ENCODE measurements at regions of chrX and their contacts with region 1.

Region 1: DNA sequence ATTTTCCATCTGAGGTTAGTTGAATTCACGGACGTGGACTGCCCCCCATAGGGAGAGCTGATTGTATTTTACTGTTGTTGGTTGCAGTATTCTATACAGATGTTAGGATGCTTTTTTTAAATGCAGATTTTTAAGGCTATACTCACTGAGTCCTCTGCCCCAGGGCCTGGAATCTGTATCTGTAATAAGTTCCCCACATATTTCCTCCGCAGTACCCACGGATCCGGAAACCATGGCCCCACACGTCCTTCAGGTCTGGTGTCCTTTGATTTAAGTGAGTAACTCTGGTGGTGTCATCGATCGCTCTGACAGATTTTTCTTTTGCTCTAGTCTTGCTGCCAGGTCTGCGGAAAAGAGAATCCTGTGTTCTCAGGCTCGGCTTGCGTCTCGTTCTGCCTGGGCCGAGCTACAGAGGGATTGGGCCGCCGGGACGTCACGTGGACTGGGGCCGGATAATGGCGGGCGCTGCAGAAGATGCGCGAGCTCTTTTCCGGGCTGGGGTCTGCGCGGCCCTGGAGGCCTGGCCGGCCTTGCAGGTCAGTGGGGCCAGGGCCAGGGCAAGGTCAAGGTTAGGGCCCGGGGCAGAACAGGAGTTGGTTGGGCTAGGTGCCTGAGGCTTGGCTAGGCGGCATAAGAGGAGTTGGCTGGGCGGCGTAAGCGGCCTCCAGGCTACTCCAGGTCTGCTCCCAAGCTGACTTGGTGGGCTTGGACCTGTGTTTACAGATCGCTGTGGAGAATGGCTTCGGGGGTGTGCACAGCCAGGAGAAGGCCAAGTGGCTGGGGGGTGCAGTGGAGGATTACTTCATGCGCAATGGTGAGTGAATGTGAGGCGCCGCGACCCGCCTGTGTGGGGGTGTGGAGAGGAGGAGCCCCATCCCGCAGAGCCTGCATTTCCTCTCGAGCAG is at the start of gene TSR2:
- DNase-seq: peak; percentile 86
- H3K4me3 Mint-ChIP-seq: peak within 1 kb of the TSS; percentile 89
- H3K27ac Mint-ChIP-seq: peak within 1 kb of the TSS; percentile 69
- H3K4me1 Mint-ChIP-seq: peaks cover 24% of the 10 kb centered on the region
- H3K27me3 Mint-ChIP-seq: no peaks in the 10 kb centered on the region
- total RNA-seq, gene TSR2: 24.4 to 26.1 TPM

Region 2: GRCh38 chrX:54182864-54183608 is 257.2 kb before region 1 on chrX and contains the start of gene FAM120C:
- CTCF ChIA-PET with region 1: no interaction called
- intact Hi-C with region 1: loop called (anchors 1 kb)
- DNase-seq: peak; percentile 66
- H3K4me3 Mint-ChIP-seq: peak within 1 kb of the TSS; percentile 75
- H3K27ac Mint-ChIP-seq: peak within 1 kb of the TSS; percentile 84
- H3K4me1 Mint-ChIP-seq: peaks cover 38% of the 10 kb centered on the region
- H3K27me3 Mint-ChIP-seq: no peaks in the 10 kb centered on the region
- total RNA-seq, gene FAM120C: 4.3 to 5.9 TPM

Region 3: GRCh38 chrX:54325713-54326112 is 114.5 kb before region 1 on chrX:
- CTCF ChIA-PET with region 1: no interaction called
- intact Hi-C with region 1: no loop called
- DNase-seq: no peak
- H3K4me3 Mint-ChIP-seq: no peak overlapping the region
- H3K27ac Mint-ChIP-seq: no peak overlapping the region
- H3K4me1 Mint-ChIP-seq: no peaks in the 10 kb centered on the region
- H3K27me3 Mint-ChIP-seq: no peaks in the 10 kb centered on the region

Region 4: DNA sequence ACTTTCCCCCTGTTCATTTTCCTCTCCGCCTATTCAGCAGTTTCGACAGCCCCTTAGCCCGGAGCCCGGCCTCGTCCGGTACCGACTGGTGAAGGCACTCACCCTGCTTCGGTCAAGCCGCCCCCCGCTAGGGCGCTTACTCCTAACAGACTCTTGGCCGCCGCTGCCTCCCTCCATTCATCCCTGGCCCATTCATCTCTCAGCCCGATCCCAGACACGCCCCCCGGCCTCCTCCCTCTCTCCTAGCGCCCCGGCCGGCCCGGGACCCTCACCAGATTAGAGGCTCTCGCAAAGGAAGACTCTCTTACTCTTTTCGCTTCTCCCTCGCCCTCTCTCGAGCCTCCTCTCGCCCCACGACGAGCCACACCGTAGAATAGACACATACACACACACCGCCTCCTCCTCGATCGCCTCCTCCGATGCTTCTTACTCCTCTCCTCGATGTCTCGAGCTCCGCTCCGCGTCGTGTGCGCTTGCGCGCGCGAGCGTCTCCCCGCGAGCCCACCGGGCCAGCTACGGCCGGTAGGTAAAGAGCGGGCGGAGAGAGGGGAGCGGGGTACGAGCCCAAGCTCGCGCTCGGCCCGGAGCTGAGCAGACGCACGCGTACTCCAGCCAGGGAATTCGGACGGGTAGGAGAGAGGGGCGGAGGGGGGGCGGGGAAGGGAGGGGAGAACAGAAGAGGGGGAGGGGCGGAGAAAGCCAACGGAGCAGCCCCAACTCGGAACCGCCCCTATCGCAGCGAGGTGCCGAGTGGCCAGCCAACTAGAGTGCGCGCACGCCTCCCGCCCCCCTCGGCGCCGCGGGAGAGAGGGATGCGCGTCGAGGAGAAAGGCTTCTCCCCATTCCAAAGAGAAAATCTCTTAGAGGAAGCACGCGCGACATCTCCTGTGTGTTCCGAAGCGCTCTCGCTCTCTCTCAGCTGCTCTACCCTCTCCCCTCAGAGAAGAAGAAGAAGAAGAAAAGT is 82.5 kb before region 1 on chrX and contains the start of gene WNK3:
- CTCF ChIA-PET with region 1: no interaction called
- intact Hi-C with region 1: loop called (anchors 1 kb)
- DNase-seq: peak; percentile 47
- H3K4me3 Mint-ChIP-seq: peak within 1 kb of the TSS; percentile 80
- H3K27ac Mint-ChIP-seq: no peak within 1 kb of the TSS
- H3K4me1 Mint-ChIP-seq: peaks cover 12% of the 10 kb centered on the region
- H3K27me3 Mint-ChIP-seq: peaks cover 10% of the 10 kb centered on the region
- total RNA-seq, gene WNK3: 0.25 to 0.60 TPM

Region 5: GRCh38 chrX:54808605-54809483 is 368.6 kb after region 1 on chrX:
- CTCF ChIA-PET with region 1: no interaction called
- intact Hi-C with region 1: loop called (anchors 1 kb)
- DNase-seq: peak; percentile 92
- H3K4me3 Mint-ChIP-seq: peak overlapping the region; percentile 88
- H3K27ac Mint-ChIP-seq: peak overlapping the region; percentile 88
- H3K4me1 Mint-ChIP-seq: peaks cover 15% of the 10 kb centered on the region
- H3K27me3 Mint-ChIP-seq: no peaks in the 10 kb centered on the region